ENCODE measurements at regions of chr6 and their contacts with region 1.

Region 1: DNA sequence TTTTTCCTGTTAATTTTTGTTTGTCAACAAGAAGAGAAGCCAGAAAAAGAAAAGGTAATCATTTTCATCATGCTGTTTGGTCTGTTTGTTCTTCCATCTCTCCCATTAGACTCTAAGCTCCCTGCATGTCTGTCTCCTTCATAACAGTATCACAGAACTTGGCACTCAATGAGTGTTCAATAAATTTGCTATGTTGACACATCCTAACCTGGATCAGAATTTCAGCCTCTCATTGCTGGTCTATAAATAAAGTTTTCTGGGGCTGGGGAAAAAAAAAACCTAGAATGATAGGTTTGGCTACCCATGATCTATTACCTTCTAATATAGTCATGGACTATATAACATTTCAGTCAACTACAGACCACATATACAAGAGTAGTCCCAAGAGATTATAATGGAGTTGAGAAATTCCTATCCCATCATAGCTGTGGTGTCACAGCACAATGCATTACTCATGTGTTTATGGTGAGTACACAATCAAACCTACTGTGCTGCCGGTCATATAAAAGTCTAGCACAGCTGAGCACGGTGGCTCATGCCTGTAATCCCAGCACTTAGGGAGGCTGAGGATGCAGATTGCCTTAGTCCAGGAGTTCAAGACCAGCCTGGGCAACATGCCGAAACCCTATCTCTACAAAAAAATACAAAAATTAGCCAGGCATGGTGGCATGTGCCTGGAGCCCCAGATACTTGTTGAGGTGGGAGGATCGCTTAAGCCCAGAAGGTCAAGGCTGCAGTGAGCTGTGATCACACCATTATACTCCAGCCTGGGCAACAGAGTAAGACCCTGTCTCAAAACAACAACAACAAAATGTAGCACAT is 5.9 kb downstream of the NUDT3 start:
- DNase-seq: no peak
- H3K4me3 ChIP-seq: no peak overlapping the region
- H3K27ac ChIP-seq: no peak overlapping the region
- H3K4me1 ChIP-seq: peaks cover 11% of the 10 kb centered on the region
- H3K27me3 ChIP-seq: no peaks in the 10 kb centered on the region
- CTCF ChIP-seq: no peak
- EP300 ChIP-seq: no peak
- POLR2A ChIP-seq: no peak

Region 2: GRCh38 chr6:34315780-34316179 is 70.7 kb before region 1 on chr6:
- intact Hi-C with region 1: loop called in 1 of 4 experiments (anchors 10 kb)
- DNase-seq: no peak
- H3K4me3 ChIP-seq: no peak overlapping the region
- H3K27ac ChIP-seq: no peak overlapping the region
- H3K4me1 ChIP-seq: peaks cover 2% of the 10 kb centered on the region
- H3K27me3 ChIP-seq: no peaks in the 10 kb centered on the region
- CTCF ChIP-seq: no peak
- EP300 ChIP-seq: no peak
- POLR2A ChIP-seq: no peak